Calu3 (cell line): ENCODE measurements at regions of chr5 and their contacts with region 1.

Region 1: GRCh38 chr5:88729084-88729828 is 153.7 kb downstream of the MEF2C start:
- DNase-seq: peak; percentile 68
- H3K4me3 Mint-ChIP-seq: no peak overlapping the region
- H3K27ac Mint-ChIP-seq: no peak overlapping the region
- H3K4me1 Mint-ChIP-seq: no peaks in the 10 kb centered on the region
- H3K27me3 Mint-ChIP-seq: no peaks in the 10 kb centered on the region
- CTCF ChIP-seq: peak; percentile 61

Region 2: GRCh38 chr5:88883059-88883835 is 154.0 kb after region 1 on chr5 and contains the start of gene MEF2C:
- CTCF ChIA-PET with region 1: interaction called, 6 read pairs
- intact Hi-C with region 1: loop called (anchors 2 kb)
- DNase-seq: peak; percentile 51
- H3K4me3 Mint-ChIP-seq: peak within 1 kb of the TSS; percentile 93
- H3K27ac Mint-ChIP-seq: peak within 1 kb of the TSS; percentile 70
- H3K4me1 Mint-ChIP-seq: peaks cover under 1% of the 10 kb centered on the region
- H3K27me3 Mint-ChIP-seq: no peaks in the 10 kb centered on the region
- CTCF ChIP-seq: no peak
- total RNA-seq, gene MEF2C: 6.1 and 6.5 TPM in 2 replicates

Region 3: DNA sequence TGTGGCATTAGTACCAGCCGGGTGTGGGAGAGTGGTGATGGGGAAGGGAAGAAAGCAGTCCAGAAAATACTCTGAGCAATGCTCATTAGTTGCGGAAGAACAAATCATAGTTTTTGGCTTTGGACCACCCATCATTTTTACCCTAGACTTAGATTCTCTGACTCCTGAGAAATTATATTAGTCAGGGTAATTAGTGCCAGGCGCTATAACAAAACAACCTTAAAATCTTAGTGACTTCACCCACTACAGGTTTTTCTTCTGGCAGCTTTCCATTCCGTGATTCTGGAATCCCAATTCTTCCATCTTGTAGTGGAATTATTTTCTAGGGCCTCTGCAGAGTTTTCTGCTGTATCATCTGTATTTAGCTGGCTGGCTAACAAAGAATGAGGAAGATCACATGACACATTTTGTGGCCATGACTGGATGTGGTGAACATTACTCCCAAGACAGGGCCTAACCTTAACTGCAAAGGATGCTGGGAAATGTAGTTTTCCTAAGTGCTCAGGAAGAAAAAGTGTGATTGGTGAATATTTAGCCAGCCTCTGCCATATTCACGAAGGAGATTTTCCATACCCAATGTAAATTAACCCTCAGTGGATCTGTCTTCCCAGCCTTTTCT is 526.7 kb after region 1 on chr5:
- CTCF ChIA-PET with region 1: no interaction called
- intact Hi-C with region 1: loop called (anchors 10 kb)
- DNase-seq: no peak
- H3K4me3 Mint-ChIP-seq: no peak overlapping the region
- H3K27ac Mint-ChIP-seq: no peak overlapping the region
- H3K4me1 Mint-ChIP-seq: no peaks in the 10 kb centered on the region
- H3K27me3 Mint-ChIP-seq: no peaks in the 10 kb centered on the region
- CTCF ChIP-seq: no peak

Region 4: GRCh38 chr5:90184764-90185163 is 1455.5 kb after region 1 on chr5:
- CTCF ChIA-PET with region 1: interaction called, 3 read pairs
- intact Hi-C with region 1: loop called (anchors 2 kb)
- DNase-seq: no peak
- H3K4me3 Mint-ChIP-seq: no peak overlapping the region
- H3K27ac Mint-ChIP-seq: no peak overlapping the region
- H3K4me1 Mint-ChIP-seq: peaks cover 26% of the 10 kb centered on the region
- H3K27me3 Mint-ChIP-seq: no peaks in the 10 kb centered on the region
- CTCF ChIP-seq: no peak

Region 5: DNA sequence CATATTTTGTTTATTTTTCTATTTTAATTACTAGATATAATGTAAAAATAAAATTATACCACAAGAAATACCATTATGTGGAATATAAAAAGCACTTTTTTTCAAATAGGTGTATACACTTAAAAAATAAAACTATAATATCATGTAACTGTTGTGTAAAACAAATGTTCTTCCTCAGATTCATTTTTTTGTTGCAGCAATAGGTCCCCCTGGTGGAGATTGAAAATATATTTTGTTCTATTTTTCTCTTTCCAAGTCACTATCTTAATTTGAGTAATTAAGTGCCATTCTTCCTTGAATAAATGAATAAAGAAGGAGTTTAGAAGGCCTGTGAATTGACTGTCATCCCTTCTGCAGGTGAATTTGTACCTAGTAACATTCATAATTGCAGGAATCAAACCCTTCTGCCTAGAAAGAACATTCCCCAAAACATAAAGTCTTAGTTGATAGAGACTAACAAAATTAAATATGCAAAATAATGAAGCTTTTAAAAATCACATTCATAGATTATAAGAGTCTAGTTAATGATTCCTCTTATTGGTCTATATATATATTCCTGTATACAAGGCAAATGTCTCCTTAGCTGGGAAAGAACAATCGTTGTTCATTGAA is 1656.9 kb after region 1 on chr5:
- CTCF ChIA-PET with region 1: no interaction called
- intact Hi-C with region 1: loop called (anchors 1 kb)
- DNase-seq: no peak
- H3K4me3 Mint-ChIP-seq: no peak overlapping the region
- H3K27ac Mint-ChIP-seq: no peak overlapping the region
- H3K4me1 Mint-ChIP-seq: peaks cover 10% of the 10 kb centered on the region
- H3K27me3 Mint-ChIP-seq: no peaks in the 10 kb centered on the region
- CTCF ChIP-seq: peak; percentile 59